Common myeloid progenitor, CD34-positive (primary cell): ENCODE measurements at regions of chr1 and their contacts with region 1.

Region 1: GRCh38 chr1:25895365-25895993 is 10.7 kb downstream of the STMN1 start:
- DNase-seq: peak; percentile 91 to 97 (median 95)
- H3K4me3 ChIP-seq: no peak overlapping the region
- H3K27ac ChIP-seq: no peak overlapping the region
- H3K4me1 ChIP-seq: peaks cover 0 to 6% (median 1%) of the 10 kb centered on the region in 4 experiments
- H3K27me3 ChIP-seq: no peaks in the 10 kb centered on the region

Region 2: GRCh38 chr1:25874934-25875855 is 20.3 kb before region 1 on chr1 and contains the start of gene PAQR7:
- CTCF ChIA-PET with region 1: interaction called, 21 read pairs
- POLR2A ChIA-PET with region 1: no interaction called
- DNase-seq: peak; percentile 59 to 82 (median 70)
- H3K4me3 ChIP-seq: peak within 1 kb of the TSS; percentile 49 to 84 (median 72)
- H3K27ac ChIP-seq: peak within 1 kb of the TSS in 1 of 2 experiments; percentile 71
- H3K4me1 ChIP-seq: peaks cover 0 to 53% (median 44%) of the 10 kb centered on the region in 4 experiments
- H3K27me3 ChIP-seq: no peaks in the 10 kb centered on the region

Region 3: DNA sequence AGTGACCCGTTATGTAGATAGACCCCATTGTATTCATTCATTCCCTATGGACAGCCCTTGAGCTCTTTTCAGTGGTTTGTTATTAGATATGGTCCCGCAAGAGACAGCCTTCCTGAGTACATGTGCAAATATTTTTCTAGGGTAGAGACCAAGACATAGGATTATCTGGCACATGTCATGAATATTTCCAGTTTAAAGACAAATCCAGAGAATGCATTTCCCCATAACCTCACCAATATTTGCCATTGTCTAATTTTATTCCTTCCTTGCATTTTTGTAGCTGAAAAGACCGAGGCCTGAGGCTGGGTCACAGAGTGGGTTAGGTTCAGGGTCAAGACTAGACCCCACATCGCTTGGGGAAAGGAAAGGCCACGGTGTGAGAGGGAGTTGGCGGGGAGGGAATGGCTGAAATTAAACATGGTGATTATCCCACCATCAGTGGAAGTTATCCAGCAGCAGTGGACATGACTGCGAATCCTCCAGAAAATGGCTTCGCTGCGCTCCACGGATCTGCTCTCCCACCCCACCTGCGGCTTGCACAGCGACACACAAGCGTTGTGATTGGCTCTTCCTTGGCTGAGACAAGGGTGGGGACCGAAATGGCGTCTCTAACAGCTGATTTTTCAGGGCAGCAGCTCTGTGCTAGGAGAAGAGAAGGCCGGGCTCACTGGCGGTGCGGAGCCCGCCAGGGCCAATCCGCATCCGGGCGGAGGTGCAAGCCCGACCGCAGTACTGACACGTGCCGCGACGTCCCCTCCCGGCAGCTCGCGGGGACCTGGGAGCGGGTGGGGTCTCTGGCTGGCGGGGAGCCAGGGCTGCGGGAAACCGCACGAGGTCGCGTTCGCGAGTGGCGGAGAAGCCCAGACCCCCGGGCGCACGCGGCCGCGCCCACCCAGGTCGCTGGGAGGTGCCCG is 26.8 kb after region 1 on chr1:
- CTCF ChIA-PET with region 1: interaction called, 10 read pairs
- POLR2A ChIA-PET with region 1: no interaction called
- DNase-seq: peak; percentile 45 to 75 (median 67)
- H3K4me3 ChIP-seq: peak overlapping the region; percentile 28 to 76 (median 70)
- H3K27ac ChIP-seq: no peak overlapping the region
- H3K4me1 ChIP-seq: peaks cover 13 to 44% (median 29%) of the 10 kb centered on the region in 4 experiments
- H3K27me3 ChIP-seq: no peaks in the 10 kb centered on the region

Region 4: DNA sequence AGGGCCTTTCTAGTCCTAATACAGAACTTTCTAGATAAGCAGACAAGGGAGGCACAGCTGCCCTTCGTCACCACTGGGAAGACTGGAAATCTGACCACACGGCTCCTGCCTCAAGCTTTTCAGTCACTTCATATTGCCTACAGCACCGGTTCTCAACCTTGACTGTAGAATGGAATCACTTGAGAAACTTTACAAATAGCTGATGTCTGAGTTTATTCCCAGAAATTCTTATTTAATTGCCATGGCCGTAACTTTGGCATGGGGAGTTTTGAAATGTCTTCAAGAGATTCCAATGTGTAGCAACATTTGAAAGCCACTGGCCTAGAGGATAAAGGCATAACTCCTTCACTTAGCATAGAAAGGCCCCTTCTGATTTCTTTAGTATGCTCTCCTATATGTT is 53.2 kb after region 1 on chr1:
- CTCF ChIA-PET with region 1: no interaction called
- POLR2A ChIA-PET with region 1: no interaction called
- DNase-seq: no peak
- H3K4me3 ChIP-seq: no peak overlapping the region
- H3K27ac ChIP-seq: no peak overlapping the region
- H3K4me1 ChIP-seq: no peaks in the 10 kb centered on the region
- H3K27me3 ChIP-seq: no peaks in the 10 kb centered on the region

Region 5: GRCh38 chr1:25990702-25991395 is 95.4 kb after region 1 on chr1:
- CTCF ChIA-PET with region 1: interaction called, 368 read pairs
- POLR2A ChIA-PET with region 1: no interaction called
- DNase-seq: peak; percentile 36 to 90 (median 84)
- H3K4me3 ChIP-seq: peak overlapping the region in 6 of 7 experiments; percentile 10 to 61 (median 52)
- H3K27ac ChIP-seq: peak overlapping the region; percentile 15 to 44
- H3K4me1 ChIP-seq: peaks cover 6 to 47% (median 31%) of the 10 kb centered on the region in 4 experiments
- H3K27me3 ChIP-seq: no peaks in the 10 kb centered on the region

Region 6: GRCh38 chr1:26009796-26010460 is 114.4 kb after region 1 on chr1:
- CTCF ChIA-PET with region 1: interaction called, 368 read pairs
- POLR2A ChIA-PET with region 1: no interaction called
- DNase-seq: peak; percentile 42 to 70 (median 51)
- H3K4me3 ChIP-seq: no peak overlapping the region
- H3K27ac ChIP-seq: no peak overlapping the region
- H3K4me1 ChIP-seq: peaks cover 0 to 2% (median 0%) of the 10 kb centered on the region in 4 experiments
- H3K27me3 ChIP-seq: no peaks in the 10 kb centered on the region